IMR-90 (cell line): ENCODE measurements at regions of chr12 and their contacts with region 1.

Region 1: GRCh38 chr12:54324617-54325441 is at the start of gene COPZ1:
- DNase-seq: peak; percentile 100
- ATAC-seq: peak; percentile 96
- H3K4me3 ChIP-seq: peak within 1 kb of the TSS; percentile 78
- H3K27ac ChIP-seq: peak within 1 kb of the TSS; percentile 95
- H3K4me1 ChIP-seq: peaks cover 3% of the 10 kb centered on the region
- H3K27me3 ChIP-seq: no peaks in the 10 kb centered on the region
- CTCF ChIP-seq: peak; percentile 90
- POLR2A ChIP-seq: peak; percentile 97
- RAD21 ChIP-seq: peak; percentile 73
- total RNA-seq, gene COPZ1: 262 and 382 TPM in 2 replicates

Region 2: GRCh38 chr12:54220092-54220557 is 104.7 kb before region 1 on chr12:
- CTCF ChIA-PET with region 1: interaction called, 4 read pairs
- POLR2A ChIA-PET with region 1: no interaction called
- dilution Hi-C with region 1: no loop called
- in situ Hi-C with region 1: no loop called
- intact Hi-C with region 1: loop called (anchors 1 kb)
- DNase-seq: peak; percentile 74
- ATAC-seq: peak; percentile 48
- H3K4me3 ChIP-seq: no peak overlapping the region
- H3K27ac ChIP-seq: no peak overlapping the region
- H3K4me1 ChIP-seq: peaks cover 20% of the 10 kb centered on the region
- H3K27me3 ChIP-seq: no peaks in the 10 kb centered on the region; the same call in 1 of the 2 replicates
- CTCF ChIP-seq: peak; percentile 81
- POLR2A ChIP-seq: no peak
- RAD21 ChIP-seq: peak; percentile 83

Region 3: GRCh38 chr12:54311051-54311450 is 13.8 kb before region 1 on chr12:
- CTCF ChIA-PET with region 1: interaction called, 4 read pairs
- POLR2A ChIA-PET with region 1: interaction called, 16 read pairs
- dilution Hi-C with region 1: no loop called
- in situ Hi-C with region 1: no loop called
- intact Hi-C with region 1: no loop called
- DNase-seq: no peak
- ATAC-seq: no peak
- H3K4me3 ChIP-seq: no peak overlapping the region
- H3K27ac ChIP-seq: no peak overlapping the region
- H3K4me1 ChIP-seq: no peaks in the 10 kb centered on the region
- H3K27me3 ChIP-seq: peaks cover 6% of the 10 kb centered on the region
- CTCF ChIP-seq: no peak
- POLR2A ChIP-seq: no peak
- RAD21 ChIP-seq: no peak

Region 4: DNA sequence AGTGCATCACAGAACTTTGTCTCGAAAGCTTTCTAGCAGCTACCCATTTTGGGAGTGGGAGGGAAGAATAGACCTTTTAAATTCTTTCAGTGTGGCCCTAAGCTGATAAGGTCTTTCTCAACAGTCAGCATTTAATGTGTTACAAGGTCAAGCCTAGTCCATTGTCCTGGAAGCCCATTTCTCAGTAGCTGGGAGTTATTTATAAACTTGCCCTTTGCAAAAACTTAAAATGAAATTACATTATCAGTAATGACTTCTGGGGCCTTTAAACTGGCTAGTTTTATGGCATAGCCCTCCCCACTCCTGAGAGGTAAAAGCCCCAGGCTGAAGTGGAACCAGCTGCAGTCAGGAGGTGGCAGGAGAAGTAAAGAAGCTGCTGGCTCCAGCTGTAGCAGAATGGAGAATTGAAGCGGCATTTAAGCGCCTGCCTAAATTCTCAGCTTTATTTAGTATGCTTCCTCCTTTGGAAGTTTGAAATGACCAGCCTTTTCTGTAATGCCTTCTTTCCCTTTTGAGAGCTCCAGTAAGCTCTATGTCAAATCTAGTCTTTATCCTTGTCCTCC is 12.5 kb after region 1 on chr12:
- CTCF ChIA-PET with region 1: interaction called, 16 read pairs
- POLR2A ChIA-PET with region 1: interaction called, 7 read pairs
- dilution Hi-C with region 1: no loop called
- in situ Hi-C with region 1: no loop called
- intact Hi-C with region 1: no loop called
- DNase-seq: no peak
- ATAC-seq: no peak
- H3K4me3 ChIP-seq: no peak overlapping the region
- H3K27ac ChIP-seq: no peak overlapping the region
- H3K4me1 ChIP-seq: peaks cover 40% of the 10 kb centered on the region
- H3K27me3 ChIP-seq: no peaks in the 10 kb centered on the region
- CTCF ChIP-seq: 0 out of 2 replicates have a peak, but pooled peaks have one; percentile 22
- POLR2A ChIP-seq: no peak
- RAD21 ChIP-seq: peak; percentile 28